Naive thymus-derived CD4-positive, alpha-beta T cell (primary cell): ENCODE measurements at regions of chr12 and their contacts with region 1.

Region 1: DNA sequence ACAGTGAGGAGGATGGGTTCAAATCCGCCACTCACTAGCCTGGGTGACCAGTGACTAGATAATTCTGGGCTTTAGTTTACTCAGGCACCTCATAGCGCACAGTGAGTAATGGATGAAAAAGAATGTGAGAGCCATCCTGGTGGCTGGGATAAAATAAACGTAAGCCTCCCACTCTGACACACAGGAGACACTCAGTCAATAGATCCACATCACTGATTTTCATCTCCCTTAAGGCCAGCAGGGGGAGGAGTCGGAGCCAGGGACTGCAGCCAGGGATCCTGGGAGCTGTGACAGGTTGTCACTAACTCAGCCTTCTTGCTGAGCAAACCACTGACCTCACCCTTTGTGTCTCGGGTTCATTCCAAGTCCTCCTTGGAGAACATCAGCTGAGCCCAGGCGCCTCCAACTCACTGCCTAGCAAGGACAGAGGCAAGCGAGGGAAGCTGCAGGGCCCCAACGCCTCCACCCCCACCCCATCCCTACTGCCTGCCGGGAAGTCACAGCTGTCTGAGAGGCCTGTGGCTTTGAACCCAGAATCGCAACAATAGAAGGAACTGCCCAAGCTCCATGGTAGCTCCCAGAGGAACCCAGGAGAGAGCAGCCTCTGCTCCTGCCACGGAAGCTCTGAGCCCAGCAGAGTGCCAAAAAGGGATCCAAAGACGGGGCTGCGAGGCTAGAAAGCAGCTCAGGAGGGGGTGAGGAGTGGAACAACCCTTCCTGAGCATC is 30.7 kb downstream of the PXN start:
- DNase-seq: no peak
- ATAC-seq: peak; percentile 7
- H3K4me3 ChIP-seq: no peak overlapping the region
- H3K4me3 Mint-ChIP-seq: peak overlapping the region in 2 of 10 donors; percentile 37 to 65
- H3K27ac ChIP-seq: peak overlapping the region; percentile 41
- H3K27ac Mint-ChIP-seq: peak overlapping the region; percentile 4 to 98 (median 92)
- H3K4me1 ChIP-seq: peaks cover 57 to 73% of the 10 kb centered on the region in 2 donors
- H3K4me1 Mint-ChIP-seq: peaks cover 56 to 94% (median 82%) of the 10 kb centered on the region in 7 donors
- H3K27me3 ChIP-seq: no peaks in the 10 kb centered on the region
- H3K27me3 Mint-ChIP-seq: no peaks in the 10 kb centered on the region

Region 2: GRCh38 chr12:120167529-120168095 is 67.2 kb before region 1 on chr12:
- CTCF ChIA-PET with region 1: no interaction called
- POLR2A ChIA-PET with region 1: no interaction called
- intact Hi-C with region 1: no loop called
- DNase-seq: no peak
- ATAC-seq: no peak
- H3K4me3 ChIP-seq: no peak overlapping the region
- H3K4me3 Mint-ChIP-seq: no peak overlapping the region
- H3K27ac ChIP-seq: no peak overlapping the region
- H3K27ac Mint-ChIP-seq: peak overlapping the region in 1 of 9 donors; percentile 36
- H3K4me1 ChIP-seq: no peaks in the 10 kb centered on the region
- H3K4me1 Mint-ChIP-seq: no peaks in the 10 kb centered on the region
- H3K27me3 ChIP-seq: no peaks in the 10 kb centered on the region
- H3K27me3 Mint-ChIP-seq: no peaks in the 10 kb centered on the region

Region 3: DNA sequence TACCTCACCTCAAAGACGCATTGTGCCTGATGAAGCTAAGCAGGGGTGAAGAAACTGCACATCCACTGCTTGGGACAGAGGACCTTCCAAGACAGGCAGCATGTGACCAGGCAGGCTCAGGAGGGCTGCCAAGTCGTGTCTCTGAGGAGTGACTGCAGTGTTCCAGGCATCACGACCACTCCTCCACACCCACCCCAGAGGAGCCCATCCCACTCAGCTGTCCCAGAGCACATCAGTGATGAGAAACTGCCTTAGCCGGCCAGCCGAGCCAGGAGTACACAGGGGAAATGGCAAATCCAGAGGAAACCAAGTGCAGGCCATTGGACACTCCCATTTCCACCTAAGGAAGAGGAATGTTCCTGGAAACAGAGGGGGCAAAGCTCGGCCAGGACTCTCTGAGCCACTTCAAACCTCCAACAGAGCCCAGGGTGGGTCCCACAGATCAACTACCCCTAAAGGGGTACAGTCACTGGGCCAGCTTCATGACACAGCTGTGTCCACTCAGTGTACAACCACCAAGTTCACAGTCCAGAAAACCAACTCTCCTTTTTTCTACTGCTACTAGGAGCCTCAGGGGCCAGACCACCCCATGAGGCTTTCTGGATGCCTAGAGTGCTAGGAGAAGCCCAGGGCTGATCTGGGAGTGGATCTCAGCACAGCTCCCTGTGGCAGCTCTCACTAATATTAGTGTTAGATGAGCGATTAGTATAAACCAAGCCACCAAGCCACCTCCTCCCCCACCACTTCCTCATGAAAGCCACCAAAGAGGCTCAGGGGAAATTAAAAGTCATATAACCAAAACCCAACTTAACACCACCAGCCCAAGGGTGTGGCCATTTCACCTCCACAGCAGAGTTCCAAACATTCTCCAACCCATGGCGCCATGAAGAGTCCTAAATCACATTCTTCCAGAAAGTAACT is 15.3 kb after region 1 on chr12:
- CTCF ChIA-PET with region 1: interaction called, 124 read pairs
- POLR2A ChIA-PET with region 1: interaction called, 205 read pairs
- intact Hi-C with region 1: loop called in 1 of 2 experiments (anchors 1 kb)
- DNase-seq: peak in 1 of 9 donors; percentile 37
- ATAC-seq: no peak
- H3K4me3 ChIP-seq: peak overlapping the region; percentile 46
- H3K4me3 Mint-ChIP-seq: peak overlapping the region; percentile 74 to 86 (median 84)
- H3K27ac ChIP-seq: peak overlapping the region; percentile 55
- H3K27ac Mint-ChIP-seq: peak overlapping the region; percentile 88 to 99 (median 96)
- H3K4me1 ChIP-seq: peaks cover 71 to 82% of the 10 kb centered on the region in 2 donors
- H3K4me1 Mint-ChIP-seq: peaks cover 68 to 92% (median 81%) of the 10 kb centered on the region in 7 donors
- H3K27me3 ChIP-seq: no peaks in the 10 kb centered on the region
- H3K27me3 Mint-ChIP-seq: no peaks in the 10 kb centered on the region

Region 4: GRCh38 chr12:120257041-120257821 is 22.4 kb after region 1 on chr12:
- CTCF ChIA-PET with region 1: interaction called, 286 read pairs
- POLR2A ChIA-PET with region 1: interaction called, 215 read pairs
- intact Hi-C with region 1: loop called in 1 of 2 experiments (anchors 1 kb)
- DNase-seq: peak in 1 of 9 donors; percentile 41
- ATAC-seq: no peak
- H3K4me3 ChIP-seq: no peak overlapping the region
- H3K4me3 Mint-ChIP-seq: peak overlapping the region; percentile 23 to 66 (median 46)
- H3K27ac ChIP-seq: peak overlapping the region; percentile 56
- H3K27ac Mint-ChIP-seq: peak overlapping the region; percentile 72 to 97 (median 89)
- H3K4me1 ChIP-seq: peaks cover 79% of the 10 kb centered on the region in 2 donors
- H3K4me1 Mint-ChIP-seq: peaks cover 77 to 98% (median 93%) of the 10 kb centered on the region in 7 donors
- H3K27me3 ChIP-seq: no peaks in the 10 kb centered on the region
- H3K27me3 Mint-ChIP-seq: no peaks in the 10 kb centered on the region